ENCODE measurements at regions of chr5 and their contacts with region 1.

Region 1: GRCh38 chr5:179333796-179334761 is 11.2 kb downstream of the ADAMTS2 start:
- DNase-seq: no peak
- ATAC-seq: no peak
- H3K4me3 ChIP-seq: no peak overlapping the region
- H3K27ac ChIP-seq: no peak overlapping the region
- H3K4me1 ChIP-seq: no peaks in the 10 kb centered on the region; the same call in 1 of the 2 replicates
- H3K27me3 ChIP-seq: no peaks in the 10 kb centered on the region
- CTCF ChIP-seq: no peak
- POLR2A ChIP-seq: no peak
- RAD21 ChIP-seq: no peak

Region 2: DNA sequence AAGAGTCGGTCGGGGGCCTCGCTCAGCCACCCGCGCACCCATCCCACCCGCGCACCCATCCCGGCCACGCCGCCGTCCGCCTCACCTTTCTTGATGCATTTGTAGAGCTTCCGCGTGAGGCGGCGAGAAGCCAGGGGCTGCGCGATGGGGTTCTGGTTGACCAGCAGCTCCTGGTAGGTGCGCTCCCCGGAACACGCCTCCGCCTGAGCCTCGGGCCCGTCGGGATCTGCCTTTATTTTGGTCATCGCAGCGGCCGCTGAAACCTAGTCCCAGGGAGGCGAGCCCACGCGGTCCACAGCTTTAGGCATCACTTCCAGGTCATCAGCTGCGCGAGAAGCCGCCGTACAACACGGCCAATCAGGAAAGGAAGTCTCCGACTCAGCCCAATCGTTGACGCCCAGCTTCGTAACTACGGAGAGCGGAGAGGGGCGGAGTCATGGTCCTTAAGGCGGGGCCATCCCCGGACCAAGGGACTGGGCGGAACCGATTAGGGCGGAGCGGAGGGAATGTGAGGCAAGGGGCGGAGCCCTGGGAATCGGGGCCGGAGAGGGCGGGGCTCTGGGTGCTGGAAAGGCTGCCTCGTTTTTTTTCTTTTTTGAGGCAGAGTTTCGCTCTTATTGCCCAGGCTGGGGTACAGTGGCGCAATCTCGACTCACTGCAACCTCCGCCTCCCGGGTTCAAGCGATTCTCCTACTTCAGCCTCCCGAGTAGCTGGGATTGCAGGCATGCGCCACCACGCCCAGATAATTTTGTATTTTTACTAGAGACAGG is 1180.3 kb before region 1 on chr5 and contains the start of gene NHP2:
- CTCF ChIA-PET with region 1: no interaction called
- POLR2A ChIA-PET with region 1: interaction called, 16 read pairs
- dilution Hi-C with region 1: no loop called
- in situ Hi-C with region 1: no loop called
- intact Hi-C with region 1: no loop called
- DNase-seq: peak; percentile 99
- ATAC-seq: peak; percentile 100
- H3K4me3 ChIP-seq: peak within 1 kb of the TSS; percentile 66
- H3K27ac ChIP-seq: peak within 1 kb of the TSS; percentile 44
- H3K4me1 ChIP-seq: peaks cover 7% of the 10 kb centered on the region
- H3K27me3 ChIP-seq: no peaks in the 10 kb centered on the region
- CTCF ChIP-seq: no peak
- POLR2A ChIP-seq: peak; percentile 66; the same call in 1 of the 2 replicates
- RAD21 ChIP-seq: no peak
- total RNA-seq, gene NHP2: 278 and 302 TPM in 2 replicates

Region 3: DNA sequence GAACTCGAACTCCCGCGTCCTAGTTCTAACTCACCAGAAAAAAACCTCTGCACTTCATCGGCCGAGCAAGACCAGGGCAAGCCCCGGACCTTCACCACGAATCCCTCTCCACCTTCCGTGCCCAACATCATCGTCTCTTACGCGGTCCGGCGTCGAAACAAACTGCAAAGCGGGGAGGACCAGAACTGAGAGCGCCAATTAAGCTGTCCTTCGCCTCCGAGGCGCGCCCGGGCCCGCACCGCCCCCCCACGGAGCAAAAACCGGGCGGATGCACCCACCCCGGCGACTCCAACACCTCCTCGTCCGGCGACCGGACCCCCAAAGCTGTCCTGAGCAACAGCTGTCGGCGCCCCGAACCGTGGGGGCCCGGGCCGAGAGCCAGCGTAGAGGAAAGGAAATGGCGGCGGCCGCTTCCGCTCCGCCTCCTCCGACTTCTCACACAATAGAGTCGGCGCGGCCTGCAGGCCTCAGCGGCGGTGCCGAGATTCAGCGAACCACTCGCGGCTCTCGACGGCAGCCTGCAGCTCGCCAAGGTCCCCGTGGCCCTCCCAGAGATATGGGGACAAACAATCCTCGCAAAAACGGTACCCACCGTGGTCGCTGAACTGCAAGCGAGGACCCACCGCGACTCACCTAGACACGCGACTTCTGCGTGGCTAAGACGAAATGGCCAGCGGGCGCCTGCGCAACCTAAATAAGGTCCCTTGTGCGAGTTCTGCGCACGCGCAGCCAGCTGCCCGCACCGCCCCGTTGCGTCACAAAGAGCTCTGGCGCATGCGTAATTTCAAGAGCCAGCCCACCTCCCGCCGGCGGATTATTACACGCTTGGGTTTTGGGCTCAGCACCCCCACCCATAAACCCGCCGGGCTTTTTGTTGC is 289.2 kb after region 1 on chr5 and contains the start of gene HNRNPH1:
- CTCF ChIA-PET with region 1: no interaction called
- POLR2A ChIA-PET with region 1: no interaction called
- dilution Hi-C with region 1: no loop called
- in situ Hi-C with region 1: no loop called
- intact Hi-C with region 1: no loop called
- DNase-seq: peak; percentile 98
- ATAC-seq: peak; percentile 84
- H3K4me3 ChIP-seq: peak within 1 kb of the TSS; percentile 69
- H3K27ac ChIP-seq: peak within 1 kb of the TSS; percentile 95
- H3K4me1 ChIP-seq: peaks cover 11% of the 10 kb centered on the region
- H3K27me3 ChIP-seq: no peaks in the 10 kb centered on the region
- CTCF ChIP-seq: 0 out of 2 replicates have a peak, but pooled peaks have one; percentile 6
- POLR2A ChIP-seq: peak; percentile 100
- RAD21 ChIP-seq: no peak
- total RNA-seq, gene HNRNPH1: 300 and 735 TPM in 2 replicates

Measured in IMR-90 (cell line).